ENCODE measurements at regions of chr1 and their contacts with region 1.

Region 1: GRCh38 chr1:61049850-61050540 is 32.4 kb upstream of the NFIA start:
- DNase-seq: peak; percentile 97

Region 2: GRCh38 chr1:61077676-61078541 is 27.9 kb after region 1 on chr1:
- intact Hi-C with region 1: loop called (anchors 1 kb)
- DNase-seq: peak; percentile 92

Region 3: DNA sequence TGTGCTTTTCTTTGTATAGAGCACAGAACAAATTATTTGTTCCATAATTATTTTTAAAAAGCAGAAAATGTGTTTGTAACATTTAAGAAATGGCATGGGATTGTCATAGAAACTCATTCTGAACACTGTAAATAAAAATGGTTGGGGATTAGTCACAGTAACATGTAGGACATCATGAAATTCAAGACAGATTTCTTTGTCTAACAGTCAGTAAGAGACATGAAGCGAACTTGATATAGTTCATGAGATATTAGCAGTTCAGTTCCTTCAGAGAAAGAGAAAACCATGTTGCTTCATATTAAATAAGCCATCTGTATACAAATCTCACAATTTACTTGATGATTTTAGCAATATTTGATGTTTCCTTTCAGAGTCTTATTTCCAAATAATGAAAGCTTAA is 52.0 kb after region 1 on chr1:
- intact Hi-C with region 1: no loop called
- DNase-seq: no peak

Region 4: GRCh38 chr1:61184040-61184713 is 134.2 kb after region 1 on chr1:
- intact Hi-C with region 1: loop called (anchors 5 kb)
- DNase-seq: peak; percentile 93

Region 5: GRCh38 chr1:61270761-61271411 is 220.9 kb after region 1 on chr1:
- intact Hi-C with region 1: loop called (anchors 10 kb)
- DNase-seq: no peak

Region 6: DNA sequence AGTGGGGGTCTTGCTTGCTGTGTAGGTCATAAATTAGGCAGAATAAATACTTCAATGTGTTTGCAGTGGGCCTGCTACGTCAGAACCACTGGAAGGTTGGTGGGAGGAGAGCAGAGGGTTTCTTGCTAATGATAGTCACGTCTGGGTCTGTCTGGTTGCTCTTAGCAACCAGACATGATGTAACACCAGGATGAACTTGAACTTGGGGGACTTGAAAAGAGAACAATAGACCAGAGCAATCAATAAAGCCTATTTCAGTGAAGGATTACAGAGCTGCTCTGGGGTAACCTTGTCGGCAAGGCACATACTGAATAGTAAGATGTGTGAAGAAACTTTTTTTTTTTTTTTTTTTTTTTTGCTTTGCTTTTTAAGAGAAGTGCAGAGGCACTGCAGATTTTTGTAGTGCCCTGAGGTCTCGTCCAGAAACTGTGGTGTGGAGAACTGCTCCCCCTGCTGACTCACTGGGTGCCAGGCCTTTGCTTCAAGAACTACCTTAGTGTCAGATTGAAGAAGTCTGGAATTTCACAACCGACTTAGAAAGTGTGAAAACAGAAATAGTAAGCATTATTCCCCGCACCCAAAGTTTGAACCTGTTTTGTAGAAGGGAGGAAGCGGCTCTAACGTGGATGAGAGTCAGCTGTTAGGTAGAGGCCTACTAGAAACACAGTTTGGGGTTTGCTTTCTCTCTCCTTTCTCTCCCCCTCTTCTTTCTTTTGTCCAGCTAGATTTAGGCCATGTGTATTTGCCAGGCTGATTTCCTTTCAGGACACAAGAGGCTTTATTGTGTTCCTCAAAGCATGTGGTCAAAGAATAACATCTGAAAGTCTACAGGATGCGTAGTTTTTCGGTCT is 403.3 kb after region 1 on chr1:
- intact Hi-C with region 1: loop called (anchors 1 kb)
- DNase-seq: peak; percentile 90

Region 7: DNA sequence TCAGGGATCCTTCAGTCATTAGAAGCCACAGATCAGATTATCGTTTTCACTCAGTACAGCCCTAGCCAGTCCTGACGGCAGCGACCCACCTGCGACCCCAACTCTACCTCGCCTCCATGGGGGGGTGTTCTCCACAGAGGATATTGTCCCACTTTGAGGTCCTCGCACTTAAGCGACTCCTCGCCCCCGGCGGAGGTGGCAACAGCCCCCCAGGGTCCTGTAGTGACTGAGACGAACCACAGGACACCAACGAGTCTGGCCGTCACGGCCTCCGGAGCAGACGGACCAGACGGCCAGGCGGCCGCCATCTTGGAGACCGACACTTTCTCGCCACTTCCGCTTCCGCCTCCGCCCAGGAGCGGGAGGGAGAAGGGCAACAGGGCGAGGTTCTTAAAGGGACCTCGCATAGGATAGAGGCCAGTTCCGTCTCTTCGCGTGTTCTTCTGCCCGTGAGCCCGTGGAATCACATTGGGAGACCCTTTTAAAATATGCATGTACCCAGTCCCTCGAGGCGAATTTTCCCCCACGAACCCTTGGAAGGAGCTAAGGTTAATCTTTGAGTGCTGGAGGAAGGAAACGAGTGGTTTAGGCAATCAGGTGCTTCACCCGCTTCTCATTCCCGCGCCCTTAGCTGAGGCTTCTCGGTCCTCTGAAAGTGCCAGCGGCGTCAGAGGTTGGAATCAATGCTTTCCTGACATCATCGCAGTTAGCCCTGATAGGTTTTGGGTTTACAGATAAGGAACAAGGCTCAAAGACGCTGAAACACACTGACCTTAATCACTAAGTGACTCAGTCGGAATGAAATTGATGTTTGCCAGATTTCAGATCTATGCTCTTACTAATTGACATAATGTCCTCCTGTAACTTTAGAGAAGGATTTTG is 675.1 kb after region 1 on chr1 and contains the start of gene TM2D1:
- intact Hi-C with region 1: loop called (anchors 10 kb)
- DNase-seq: peak; percentile 96
- total RNA-seq, gene TM2D1: 34.2 TPM

Region 8: GRCh38 chr1:61851849-61852669 is 802.1 kb after region 1 on chr1:
- intact Hi-C with region 1: loop called (anchors 5 kb)
- DNase-seq: no peak